ENCODE measurements at regions of chr5 and their contacts with region 1.

Region 1: GRCh38 chr5:173932695-173933139 is 44.6 kb downstream of the CPEB4 start:
- DNase-seq: no peak
- H3K4me3 ChIP-seq: no peak overlapping the region
- H3K27ac ChIP-seq: no peak overlapping the region
- H3K4me1 ChIP-seq: peaks cover 0 to 16% (median 3%) of the 10 kb centered on the region in 4 donors
- H3K27me3 ChIP-seq: no peaks in the 10 kb centered on the region
- CTCF ChIP-seq: no peak

Region 2: DNA sequence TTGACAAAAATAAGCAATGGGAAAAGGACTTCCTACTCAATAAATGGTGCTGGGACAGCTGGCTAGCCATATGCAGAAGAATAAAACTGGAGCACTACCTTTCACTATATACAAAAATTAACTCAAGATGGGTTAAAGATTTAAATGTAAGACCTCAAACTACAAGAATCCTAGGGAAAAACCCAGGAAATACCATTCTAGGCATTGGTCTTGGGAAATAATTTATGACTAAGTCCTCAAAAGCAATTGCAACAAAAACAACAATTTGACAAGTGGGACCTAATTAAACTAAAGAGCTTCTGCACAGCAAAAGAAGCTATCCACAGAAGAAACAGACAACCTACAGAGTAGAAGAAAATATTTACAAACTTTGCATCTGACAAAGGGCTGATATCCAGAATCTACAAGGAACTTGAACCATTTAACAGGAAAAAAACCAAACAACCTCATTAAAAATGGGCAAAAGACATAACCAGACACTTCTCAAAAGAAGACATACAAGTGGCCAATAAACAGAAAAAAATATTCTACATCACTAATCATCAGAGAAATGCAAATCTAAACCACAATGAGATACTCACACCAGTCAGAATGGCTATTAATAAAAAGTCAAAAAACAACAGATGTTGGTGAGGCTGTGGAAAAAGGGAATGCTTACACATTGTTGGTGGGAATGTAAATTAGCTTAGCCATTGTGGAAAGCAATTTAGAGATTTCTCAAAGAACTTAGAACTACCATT is 119.7 kb before region 1 on chr5:
- intact Hi-C with region 1: no loop called
- DNase-seq: no peak
- H3K4me3 ChIP-seq: no peak overlapping the region
- H3K27ac ChIP-seq: no peak overlapping the region
- H3K4me1 ChIP-seq: no peaks in the 10 kb centered on the region
- H3K27me3 ChIP-seq: no peaks in the 10 kb centered on the region
- CTCF ChIP-seq: no peak

Region 3: DNA sequence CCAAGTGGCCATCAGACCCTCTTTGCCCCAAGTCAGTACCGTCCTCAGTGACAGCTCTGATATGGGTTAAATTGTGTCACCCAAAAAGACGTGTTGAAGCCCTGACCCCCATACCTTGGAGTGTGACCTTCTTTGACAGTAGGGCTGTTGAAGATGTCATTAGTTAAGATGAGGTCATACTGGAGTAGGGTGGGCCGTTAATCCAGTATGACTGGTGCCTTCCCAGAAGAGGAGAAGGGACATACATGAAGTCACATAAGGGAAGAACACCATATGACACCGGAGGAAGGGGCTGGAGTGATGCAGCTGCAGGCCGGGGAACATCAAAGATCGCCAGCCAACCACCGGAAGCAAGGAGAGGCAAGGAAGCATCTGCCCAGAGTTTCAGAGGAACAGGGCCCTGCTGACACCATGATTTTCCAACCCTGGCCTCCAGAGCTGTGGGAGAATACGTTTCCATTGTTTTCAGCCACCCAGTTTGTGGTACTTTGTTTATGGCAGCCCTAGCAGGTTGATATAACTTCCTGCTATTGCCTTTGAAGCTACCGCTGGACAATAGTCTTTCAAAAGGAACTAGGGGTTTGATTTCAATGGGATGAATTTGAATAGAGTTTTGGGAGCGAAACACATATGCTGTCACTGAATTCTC is 81.0 kb before region 1 on chr5:
- intact Hi-C with region 1: no loop called
- DNase-seq: peak in 1 of 2 donors; percentile 22
- H3K4me3 ChIP-seq: no peak overlapping the region
- H3K27ac ChIP-seq: no peak overlapping the region
- H3K4me1 ChIP-seq: peaks cover 0 to 3% (median 0%) of the 10 kb centered on the region in 4 donors
- H3K27me3 ChIP-seq: no peaks in the 10 kb centered on the region
- CTCF ChIP-seq: no peak

Region 4: GRCh38 chr5:173963867-173964441 is 31.2 kb after region 1 on chr5:
- intact Hi-C with region 1: loop called (anchors 2 kb)
- DNase-seq: no peak
- H3K4me3 ChIP-seq: no peak overlapping the region
- H3K27ac ChIP-seq: no peak overlapping the region
- H3K4me1 ChIP-seq: no peaks in the 10 kb centered on the region
- H3K27me3 ChIP-seq: no peaks in the 10 kb centered on the region
- CTCF ChIP-seq: no peak

Measured in tibial artery (tissue), 4 donors.